ENCODE measurements at regions of chr21 and their contacts with region 1.

Region 1: GRCh38 chr21:42973991-42974831 is at the start of gene PKNOX1:
- DNase-seq: peak; percentile 99 to 100
- ATAC-seq: peak; percentile 85 to 94 (median 90)
- H3K4me3 ChIP-seq: peak within 1 kb of the TSS; percentile 79
- H3K27ac ChIP-seq: peak within 1 kb of the TSS; percentile 96
- H3K4me1 ChIP-seq: peaks cover 26% of the 10 kb centered on the region
- H3K27me3 ChIP-seq: no peaks in the 10 kb centered on the region
- CTCF ChIP-seq: peak; percentile 6
- total RNA-seq, gene PKNOX1: 12.1 to 14.7 (median 13.2) TPM

Region 2: DNA sequence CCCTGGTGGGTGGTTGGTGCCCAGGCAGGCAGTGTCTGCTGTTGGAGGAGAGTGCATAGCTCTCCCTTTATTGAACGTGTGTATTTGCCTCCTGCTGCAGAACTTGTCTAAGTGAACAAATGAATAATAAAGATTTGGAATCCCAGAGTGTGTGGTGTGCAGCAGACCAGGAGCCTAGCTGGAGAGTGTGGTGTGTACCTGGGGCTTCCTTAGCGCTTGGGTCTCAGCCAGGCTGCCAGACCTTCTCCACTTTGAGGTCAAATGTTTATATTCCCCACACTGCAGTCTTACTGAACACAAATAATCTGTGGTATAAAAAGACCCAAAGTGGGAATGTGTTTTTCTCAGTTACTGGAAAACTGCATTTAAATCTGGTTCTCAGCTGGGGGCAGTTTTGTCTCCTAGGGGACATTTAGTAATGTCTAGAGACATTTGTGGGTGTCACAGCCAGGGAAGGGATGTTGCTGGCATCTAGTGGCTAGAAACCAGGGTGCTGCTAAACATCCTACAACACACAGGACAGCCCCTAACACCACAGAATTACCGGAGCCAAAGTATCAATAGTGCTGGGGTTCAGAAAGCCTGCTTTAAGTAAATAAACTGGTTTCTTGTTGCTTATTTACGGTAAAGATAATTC is 437.0 kb before region 1 on chr21:
- intact Hi-C with region 1: loop called in 1 of 2 experiments (anchors 10 kb)
- DNase-seq: no peak
- ATAC-seq: no peak
- H3K4me3 ChIP-seq: no peak overlapping the region
- H3K27ac ChIP-seq: no peak overlapping the region
- H3K4me1 ChIP-seq: peaks cover 12% of the 10 kb centered on the region
- H3K27me3 ChIP-seq: no peaks in the 10 kb centered on the region
- CTCF ChIP-seq: no peak

Region 3: GRCh38 chr21:42892931-42893755 is 81.1 kb before region 1 on chr21 and contains the start of gene NDUFV3:
- intact Hi-C with region 1: loop called in 1 of 2 experiments (anchors 10 kb)
- DNase-seq: peak; percentile 100
- ATAC-seq: peak; percentile 96 to 98 (median 98)
- H3K4me3 ChIP-seq: peak within 1 kb of the TSS; percentile 82
- H3K27ac ChIP-seq: peak within 1 kb of the TSS; percentile 97
- H3K4me1 ChIP-seq: peaks cover 4% of the 10 kb centered on the region
- H3K27me3 ChIP-seq: no peaks in the 10 kb centered on the region
- CTCF ChIP-seq: no peak
- total RNA-seq, gene NDUFV3: 69.1 to 105 (median 88.0) TPM

Region 4: DNA sequence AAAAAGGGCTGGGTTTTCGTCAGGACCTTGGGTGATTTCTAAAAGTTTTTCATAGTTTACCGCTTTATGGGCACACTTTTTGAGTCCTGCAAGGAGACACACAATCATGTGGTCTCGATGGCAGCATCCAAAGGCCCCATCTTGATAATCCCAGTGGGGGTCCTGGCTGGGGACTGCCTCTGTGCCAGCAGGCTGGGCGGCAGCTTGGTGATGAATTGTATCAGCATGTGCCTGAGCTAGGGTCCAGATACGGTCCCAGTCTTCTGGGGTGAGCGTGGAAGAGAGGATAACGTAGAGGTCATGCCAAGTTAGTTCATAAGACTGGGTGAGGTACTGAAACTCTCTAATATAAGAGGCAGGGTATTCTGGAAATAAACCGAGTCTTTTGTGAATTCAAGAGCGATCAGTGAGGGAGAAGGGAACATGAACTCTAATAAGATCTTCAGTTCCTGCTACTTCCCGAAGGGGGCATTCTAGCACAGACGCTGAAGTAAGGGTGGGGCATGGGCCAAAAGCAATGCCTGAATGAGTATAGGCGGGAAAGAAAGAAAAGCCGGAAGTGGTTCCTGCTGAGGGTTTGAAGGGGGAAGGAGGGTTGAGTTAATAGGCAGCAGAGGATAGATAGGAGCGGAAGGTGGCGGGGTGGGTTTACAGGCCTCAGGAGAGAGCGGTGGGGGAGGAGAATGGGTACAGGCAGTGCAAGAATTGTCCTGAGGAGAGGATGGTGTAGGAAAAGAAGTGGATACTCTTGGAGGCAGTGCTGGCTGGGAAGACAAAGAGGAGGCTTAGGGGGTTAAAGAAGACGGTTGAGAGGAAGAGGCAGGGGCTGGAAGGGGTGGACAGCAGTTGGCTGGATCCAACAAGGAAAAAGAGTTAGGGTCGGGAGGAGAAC is 50.4 kb before region 1 on chr21:
- intact Hi-C with region 1: loop called in 1 of 2 experiments (anchors 5 kb)
- DNase-seq: peak; percentile 57 to 67
- ATAC-seq: peak; percentile 79 to 92 (median 88)
- H3K4me3 ChIP-seq: peak overlapping the region; percentile 25
- H3K27ac ChIP-seq: no peak overlapping the region
- H3K4me1 ChIP-seq: peaks cover 8% of the 10 kb centered on the region
- H3K27me3 ChIP-seq: no peaks in the 10 kb centered on the region
- CTCF ChIP-seq: peak; percentile 73

Region 5: DNA sequence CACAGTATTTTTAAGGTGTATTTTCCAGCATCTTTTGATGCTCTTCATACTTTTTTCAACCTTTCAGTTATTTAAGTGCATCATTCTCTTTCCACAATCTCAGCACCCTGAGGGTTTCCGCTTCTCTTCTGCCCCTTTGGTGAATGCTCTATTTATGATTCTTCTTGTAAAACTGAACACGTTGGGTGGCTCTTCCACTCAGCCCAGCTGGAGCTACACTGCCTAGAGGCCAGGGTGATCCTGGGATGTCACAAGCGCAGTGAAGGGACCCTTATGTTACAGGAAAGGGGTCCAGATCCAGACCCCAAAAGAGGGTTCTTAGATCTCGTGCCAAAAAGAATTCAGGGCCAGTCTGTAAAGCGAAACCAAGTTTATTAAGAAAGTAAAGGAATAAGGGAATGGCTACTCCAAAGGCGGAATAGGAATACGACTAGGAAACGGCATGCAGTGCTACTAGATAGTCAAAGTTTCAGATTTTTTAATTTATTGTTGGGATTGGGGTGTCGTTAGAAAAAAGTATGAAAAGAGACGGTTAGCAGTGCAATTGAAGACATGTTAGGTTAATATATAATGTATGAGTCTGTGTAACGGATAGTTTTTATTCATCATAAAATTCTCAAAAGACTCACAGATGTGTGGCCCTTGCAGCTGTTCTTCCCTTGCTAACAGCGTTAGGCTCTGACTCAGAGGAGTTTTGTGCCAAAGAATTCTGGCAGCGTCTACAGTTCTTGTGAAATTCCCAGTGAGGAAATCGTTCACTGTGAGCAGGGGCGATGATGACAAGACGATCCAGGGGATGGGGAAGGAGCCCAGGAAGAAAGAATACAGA is 34.4 kb before region 1 on chr21:
- intact Hi-C with region 1: loop called in 1 of 2 experiments (anchors 5 kb)
- DNase-seq: peak; percentile 70 to 77
- ATAC-seq: peak; percentile 98 to 99 (median 98)
- H3K4me3 ChIP-seq: no peak overlapping the region
- H3K27ac ChIP-seq: peak overlapping the region; percentile 56
- H3K4me1 ChIP-seq: peaks cover 13% of the 10 kb centered on the region
- H3K27me3 ChIP-seq: no peaks in the 10 kb centered on the region
- CTCF ChIP-seq: no peak

Region 6: GRCh38 chr21:44338971-44339910 is 1365.0 kb after region 1 on chr21 and contains the start of gene CFAP410:
- intact Hi-C with region 1: loop called in 1 of 2 experiments (anchors 10 kb)
- DNase-seq: peak; percentile 96 to 98
- ATAC-seq: peak; percentile 93 to 96 (median 95)
- H3K4me3 ChIP-seq: peak within 1 kb of the TSS; percentile 99
- H3K27ac ChIP-seq: peak within 1 kb of the TSS; percentile 98
- H3K4me1 ChIP-seq: peaks cover 14% of the 10 kb centered on the region
- H3K27me3 ChIP-seq: no peaks in the 10 kb centered on the region
- CTCF ChIP-seq: no peak
- total RNA-seq, gene CFAP410: 8.3 to 10.5 (median 9.7) TPM

Measured in psoas muscle (tissue), 8 donors.